PC-9 (cell line): ENCODE measurements at regions of chr4 and their contacts with region 1.

Region 1: GRCh38 chr4:44720371-44720770 is 6.0 kb downstream of the GNPDA2 start:
- DNase-seq: no peak
- H3K4me3 ChIP-seq: no peak overlapping the region
- H3K27ac ChIP-seq: no peak overlapping the region
- H3K4me1 ChIP-seq: peaks cover 6% of the 10 kb centered on the region; the same call in 1 of the 2 replicates
- H3K27me3 ChIP-seq: no peaks in the 10 kb centered on the region
- CTCF ChIP-seq: no peak

Region 2: DNA sequence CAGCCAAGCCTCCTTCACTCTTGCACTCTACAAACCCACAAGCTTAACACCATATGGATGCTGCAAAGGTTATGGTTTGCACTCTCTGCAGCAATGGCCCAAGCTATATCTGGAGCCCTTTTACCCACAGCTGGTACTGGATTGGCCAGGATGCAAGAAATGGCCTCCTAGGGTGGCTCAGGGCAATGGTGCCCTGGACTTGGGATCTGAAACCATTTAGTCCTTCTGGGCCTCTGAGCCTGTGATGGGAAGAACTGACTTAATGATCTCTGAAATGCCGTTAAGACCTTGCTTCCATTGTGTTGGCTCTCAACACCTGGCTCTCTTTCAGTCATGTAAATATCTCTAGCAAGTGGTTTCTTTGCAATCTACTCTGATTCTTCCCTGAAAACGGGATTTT is 897.8 kb before region 1 on chr4:
- CTCF ChIA-PET with region 1: no interaction called
- POLR2A ChIA-PET with region 1: no interaction called
- intact Hi-C with region 1: no loop called
- DNase-seq: no peak
- H3K4me3 ChIP-seq: no peak overlapping the region
- H3K27ac ChIP-seq: no peak overlapping the region
- H3K4me1 ChIP-seq: no peaks in the 10 kb centered on the region
- H3K27me3 ChIP-seq: no peaks in the 10 kb centered on the region
- CTCF ChIP-seq: no peak

Region 3: GRCh38 chr4:44661940-44662622 is 58.3 kb before region 1 on chr4:
- CTCF ChIA-PET with region 1: no interaction called
- POLR2A ChIA-PET with region 1: no interaction called
- intact Hi-C with region 1: no loop called
- DNase-seq: no peak
- H3K4me3 ChIP-seq: no peak overlapping the region
- H3K27ac ChIP-seq: no peak overlapping the region
- H3K4me1 ChIP-seq: no peaks in the 10 kb centered on the region
- H3K27me3 ChIP-seq: no peaks in the 10 kb centered on the region
- CTCF ChIP-seq: no peak

Region 4: GRCh38 chr4:44700427-44700826 is 19.9 kb before region 1 on chr4:
- CTCF ChIA-PET with region 1: no interaction called
- POLR2A ChIA-PET with region 1: no interaction called
- intact Hi-C with region 1: loop called (anchors 1 kb)
- DNase-seq: no peak
- H3K4me3 ChIP-seq: no peak overlapping the region
- H3K27ac ChIP-seq: no peak overlapping the region
- H3K4me1 ChIP-seq: no peaks in the 10 kb centered on the region
- H3K27me3 ChIP-seq: no peaks in the 10 kb centered on the region
- CTCF ChIP-seq: no peak